ENCODE measurements at regions of chr17 and their contacts with region 1.

Region 1: GRCh38 chr17:77140166-77140878 is 447 bp upstream of the SEC14L1 start:
- DNase-seq: peak; percentile 100
- H3K4me3 Mint-ChIP-seq: peak overlapping the region; percentile 65
- H3K27ac Mint-ChIP-seq: peak overlapping the region; percentile 94
- H3K4me1 Mint-ChIP-seq: peaks cover 55% of the 10 kb centered on the region
- H3K27me3 Mint-ChIP-seq: no peaks in the 10 kb centered on the region

Region 2: GRCh38 chr17:76726231-76726775 is 414.0 kb before region 1 on chr17 and contains the start of gene JMJD6:
- intact Hi-C with region 1: loop called (anchors 2 kb)
- DNase-seq: peak; percentile 98
- H3K4me3 Mint-ChIP-seq: peak within 1 kb of the TSS; percentile 96
- H3K27ac Mint-ChIP-seq: peak within 1 kb of the TSS; percentile 97
- H3K4me1 Mint-ChIP-seq: peaks cover 39% of the 10 kb centered on the region
- H3K27me3 Mint-ChIP-seq: no peaks in the 10 kb centered on the region
- total RNA-seq, gene JMJD6: 82.5 and 86.3 TPM in 2 replicates

Region 3: GRCh38 chr17:76997981-76998531 is 142.3 kb before region 1 on chr17:
- intact Hi-C with region 1: loop called (anchors 5 kb)
- DNase-seq: peak; percentile 92
- H3K4me3 Mint-ChIP-seq: peak overlapping the region; percentile 62
- H3K27ac Mint-ChIP-seq: peak overlapping the region; percentile 92
- H3K4me1 Mint-ChIP-seq: peaks cover 50% of the 10 kb centered on the region
- H3K27me3 Mint-ChIP-seq: no peaks in the 10 kb centered on the region

Region 4: GRCh38 chr17:77088455-77089123 is 51.7 kb before region 1 on chr17:
- intact Hi-C with region 1: loop called (anchors 1 kb)
- DNase-seq: peak; percentile 97
- H3K4me3 Mint-ChIP-seq: peak overlapping the region; percentile 93
- H3K27ac Mint-ChIP-seq: peak overlapping the region; percentile 97
- H3K4me1 Mint-ChIP-seq: peaks cover 44% of the 10 kb centered on the region
- H3K27me3 Mint-ChIP-seq: no peaks in the 10 kb centered on the region

Region 5: GRCh38 chr17:77096570-77097214 is 43.6 kb before region 1 on chr17:
- intact Hi-C with region 1: loop called (anchors 2 kb)
- DNase-seq: no peak
- H3K4me3 Mint-ChIP-seq: no peak overlapping the region
- H3K27ac Mint-ChIP-seq: peak overlapping the region; percentile 78
- H3K4me1 Mint-ChIP-seq: peaks cover 31% of the 10 kb centered on the region
- H3K27me3 Mint-ChIP-seq: no peaks in the 10 kb centered on the region

Region 6: GRCh38 chr17:77127735-77128361 is 12.5 kb before region 1 on chr17:
- intact Hi-C with region 1: loop called (anchors 1 kb)
- DNase-seq: peak; percentile 94
- H3K4me3 Mint-ChIP-seq: peak overlapping the region; percentile 73
- H3K27ac Mint-ChIP-seq: peak overlapping the region; percentile 93
- H3K4me1 Mint-ChIP-seq: peaks cover 43% of the 10 kb centered on the region
- H3K27me3 Mint-ChIP-seq: no peaks in the 10 kb centered on the region

Region 7: DNA sequence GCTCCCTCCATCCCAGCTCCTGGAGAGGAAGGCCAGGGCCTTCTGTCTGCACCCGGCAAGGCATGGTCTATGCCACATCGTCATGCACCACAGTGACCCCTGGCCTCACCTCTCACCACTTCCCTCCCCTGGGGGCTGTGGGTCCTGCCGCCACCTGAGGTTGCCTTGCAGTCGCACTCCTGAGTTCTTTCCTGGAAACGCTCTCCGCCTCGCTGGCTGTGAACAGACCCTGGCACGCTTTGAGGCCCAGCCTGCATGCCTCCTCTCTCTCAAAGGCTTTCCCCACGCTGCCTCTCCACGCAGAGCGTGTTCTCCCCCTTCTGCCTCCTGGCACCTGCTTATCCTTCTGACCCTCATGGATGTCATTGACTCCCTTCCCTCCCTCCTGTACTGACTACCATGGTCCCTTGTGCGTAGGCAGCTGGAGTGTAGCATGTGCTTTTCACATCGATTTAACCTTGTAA is 45.9 kb after region 1 on chr17:
- intact Hi-C with region 1: loop called (anchors 2 kb)
- DNase-seq: peak; percentile 75
- H3K4me3 Mint-ChIP-seq: no peak overlapping the region
- H3K27ac Mint-ChIP-seq: no peak overlapping the region
- H3K4me1 Mint-ChIP-seq: peaks cover 54% of the 10 kb centered on the region
- H3K27me3 Mint-ChIP-seq: no peaks in the 10 kb centered on the region

Region 8: DNA sequence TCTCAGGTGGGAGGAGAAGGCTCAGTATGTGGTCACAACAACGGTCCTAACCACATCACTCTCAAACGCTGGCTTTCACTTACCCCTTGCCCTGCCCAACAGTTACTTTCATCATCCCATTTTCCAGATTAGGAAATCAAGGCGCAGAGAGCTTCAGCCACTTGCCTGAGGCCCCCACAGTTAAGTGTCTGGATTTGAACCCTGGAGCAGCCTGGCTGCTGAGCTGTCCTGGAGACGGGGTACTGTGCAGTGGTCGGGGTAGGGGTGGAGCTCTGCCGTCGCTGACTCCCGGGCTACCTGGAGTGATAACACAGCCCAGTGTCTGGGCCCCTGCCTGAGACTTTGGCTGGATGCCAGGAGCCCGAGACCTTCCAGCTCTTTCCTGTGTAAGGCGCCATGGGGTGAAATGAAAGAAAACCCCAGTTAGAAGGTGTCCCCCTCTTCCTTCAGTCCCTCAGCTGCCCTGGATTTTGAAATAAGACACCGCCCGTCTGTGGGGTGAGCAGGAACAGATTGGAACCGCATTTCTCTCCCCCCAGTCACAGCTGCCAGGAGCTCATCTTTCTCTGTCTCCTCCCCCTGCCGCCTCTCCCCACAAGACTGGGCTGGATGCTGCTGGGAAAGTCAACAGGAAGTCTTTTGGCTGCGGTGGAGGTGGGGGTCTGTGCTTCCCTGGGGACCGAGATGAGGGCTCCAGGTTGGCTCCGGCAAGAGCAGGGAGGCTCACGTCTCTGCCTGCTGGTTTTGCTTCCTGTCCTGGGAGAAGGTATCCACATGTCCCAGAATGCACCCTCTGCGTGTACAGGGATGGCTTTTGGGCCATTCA is 280.7 kb after region 1 on chr17:
- intact Hi-C with region 1: no loop called
- DNase-seq: peak; percentile 78
- H3K4me3 Mint-ChIP-seq: peak overlapping the region; percentile 75
- H3K27ac Mint-ChIP-seq: peak overlapping the region; percentile 85
- H3K4me1 Mint-ChIP-seq: peaks cover 35% of the 10 kb centered on the region
- H3K27me3 Mint-ChIP-seq: no peaks in the 10 kb centered on the region